Posterior vena cava (tissue), 2 donors: ENCODE measurements at regions of chr4 and their contacts with region 1.

Region 1: DNA sequence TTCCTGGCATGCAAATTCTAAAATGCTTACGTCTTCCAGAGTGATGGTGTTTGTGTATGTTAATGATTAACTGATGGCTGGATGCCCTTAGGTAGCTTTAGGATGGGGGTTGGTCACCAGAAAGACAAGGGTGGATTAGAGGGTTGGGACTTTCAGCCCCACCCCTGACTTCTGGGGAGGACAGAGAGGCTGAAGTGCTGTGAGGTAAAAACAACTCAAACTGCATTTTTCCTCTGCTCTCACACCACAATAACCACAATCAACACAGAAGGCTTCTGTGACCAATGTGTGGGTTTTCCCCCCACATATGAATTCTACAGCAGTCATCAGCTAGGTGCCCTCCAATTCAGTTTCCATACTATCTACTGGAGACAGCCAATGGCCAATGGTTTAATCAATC is 18.7 kb upstream of the DDIT4L start:
- DNase-seq: no peak

Region 2: DNA sequence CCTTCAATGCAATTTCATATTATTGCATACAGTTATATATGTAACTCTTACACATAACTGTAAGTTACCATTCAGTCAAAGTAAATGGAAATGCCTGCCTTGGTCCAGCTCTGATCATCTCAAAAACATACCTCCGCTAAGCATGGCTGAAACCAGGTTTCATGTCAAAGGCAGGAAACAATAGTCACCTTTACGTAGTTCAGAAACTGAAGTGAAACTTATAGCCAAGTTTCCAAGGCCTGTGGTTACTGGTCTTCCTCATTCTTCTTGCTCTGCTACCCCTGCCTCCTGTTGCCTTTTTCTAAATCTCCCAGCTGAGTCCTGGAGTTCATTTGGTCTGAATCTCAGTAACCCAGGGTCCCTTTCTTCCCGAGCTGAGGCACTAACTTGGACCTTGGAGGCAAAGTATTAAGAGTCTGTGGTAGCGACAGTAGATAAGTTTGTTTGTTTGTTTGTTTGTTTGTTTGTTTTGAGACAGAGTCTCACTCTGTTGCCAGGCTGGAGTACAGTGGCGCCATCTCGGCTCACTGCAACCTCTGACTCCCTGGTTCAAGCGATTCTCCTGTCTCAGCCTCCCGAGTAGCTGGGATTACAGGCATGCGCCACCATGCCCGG is 361.5 kb before region 1 on chr4:
- intact Hi-C with region 1: loop called in 1 of 2 experiments (anchors 5 kb)
- DNase-seq: no peak

Region 3: DNA sequence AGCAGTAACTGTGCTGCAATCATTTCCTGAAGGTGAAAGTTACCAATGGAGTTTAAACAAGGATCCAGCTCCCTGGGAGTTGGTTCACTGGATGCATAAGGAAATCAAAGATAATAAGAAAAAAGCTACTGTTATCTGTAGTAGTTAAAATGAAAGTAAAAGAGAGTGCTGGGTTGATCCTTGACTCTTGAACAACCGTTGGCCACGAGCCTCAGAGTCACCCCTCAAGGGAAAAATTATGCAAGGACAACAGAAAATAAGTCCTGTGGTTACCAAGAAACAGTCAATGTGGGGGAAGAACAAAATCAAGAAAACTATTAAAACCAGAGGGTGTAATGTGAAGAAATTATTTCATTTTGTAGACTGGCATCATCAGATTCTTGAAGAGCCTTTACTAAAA is 31.0 kb after region 1 on chr4:
- intact Hi-C with region 1: loop called in 1 of 2 experiments (anchors 1 kb)
- DNase-seq: no peak